PC-9 (cell line): ENCODE measurements at regions of chr6 and their contacts with region 1.

Region 1: GRCh38 chr6:65908065-65908464 is 201.0 kb upstream of the EYS start:
- DNase-seq: no peak
- H3K4me3 ChIP-seq: no peak overlapping the region
- H3K27ac ChIP-seq: no peak overlapping the region
- H3K4me1 ChIP-seq: no peaks in the 10 kb centered on the region
- H3K27me3 ChIP-seq: no peaks in the 10 kb centered on the region
- CTCF ChIP-seq: no peak

Region 2: DNA sequence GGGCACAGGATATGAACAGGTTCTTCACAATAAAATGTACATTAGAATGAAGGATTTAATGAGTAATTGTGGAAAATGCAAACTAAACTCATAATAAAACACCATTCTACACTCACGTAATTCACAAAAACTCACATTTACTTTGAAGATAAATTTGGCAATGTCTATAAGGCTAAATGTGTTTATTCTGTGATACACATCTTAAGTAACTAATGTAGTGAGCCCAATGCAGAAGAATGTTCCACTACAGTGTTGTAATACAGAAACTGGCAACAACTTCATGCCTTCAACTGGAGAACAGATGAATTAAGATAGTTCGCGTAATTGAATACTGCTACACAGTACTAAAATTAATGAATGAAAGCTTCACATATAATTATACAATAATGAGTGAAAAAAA is 72.4 kb before region 1 on chr6:
- CTCF ChIA-PET with region 1: no interaction called
- POLR2A ChIA-PET with region 1: no interaction called
- intact Hi-C with region 1: no loop called
- DNase-seq: no peak
- H3K4me3 ChIP-seq: no peak overlapping the region
- H3K27ac ChIP-seq: no peak overlapping the region
- H3K4me1 ChIP-seq: no peaks in the 10 kb centered on the region
- H3K27me3 ChIP-seq: no peaks in the 10 kb centered on the region
- CTCF ChIP-seq: no peak

Region 3: GRCh38 chr6:66082914-66083313 is 174.8 kb after region 1 on chr6:
- CTCF ChIA-PET with region 1: no interaction called
- POLR2A ChIA-PET with region 1: no interaction called
- intact Hi-C with region 1: loop called (anchors 5 kb)
- DNase-seq: no peak
- H3K4me3 ChIP-seq: no peak overlapping the region
- H3K27ac ChIP-seq: no peak overlapping the region
- H3K4me1 ChIP-seq: no peaks in the 10 kb centered on the region
- H3K27me3 ChIP-seq: no peaks in the 10 kb centered on the region
- CTCF ChIP-seq: no peak